ENCODE measurements at regions of chr3 and their contacts with region 1.

Region 1: DNA sequence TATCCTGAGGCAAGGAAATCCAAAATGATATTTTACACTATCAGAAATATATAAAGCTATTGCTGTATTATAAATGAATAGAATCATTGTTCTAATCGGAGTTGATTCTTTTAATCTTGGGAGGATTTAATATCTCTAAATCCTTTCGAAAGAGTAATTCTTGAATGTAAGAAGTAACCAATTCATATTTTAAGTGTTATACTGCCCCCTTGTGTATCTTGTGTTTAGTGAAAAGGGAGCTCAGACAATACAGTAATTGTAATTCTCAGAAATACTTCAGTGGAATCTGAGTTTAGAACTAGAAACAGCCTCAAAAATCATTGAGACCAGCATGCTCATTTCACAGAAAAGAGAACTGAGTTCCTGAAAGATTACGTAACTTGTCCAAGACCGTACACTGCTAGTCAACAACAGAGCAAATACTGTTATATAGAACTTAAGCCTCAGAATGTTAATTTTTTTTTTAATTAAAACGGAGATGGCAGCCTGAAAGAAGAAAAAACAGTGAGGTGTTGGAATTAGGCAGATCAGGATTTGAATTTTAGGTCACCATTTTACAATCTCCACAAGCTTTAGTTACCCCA is 42.9 kb downstream of the PLCH1 start:
- DNase-seq: no peak
- H3K4me3 ChIP-seq: no peak overlapping the region
- H3K27ac ChIP-seq: no peak overlapping the region
- H3K4me1 ChIP-seq: no peaks in the 10 kb centered on the region
- H3K27me3 ChIP-seq: no peaks in the 10 kb centered on the region
- CTCF ChIP-seq: peak; percentile 35 to 77 (median 68)
- POLR2A ChIP-seq: no peak

Region 2: DNA sequence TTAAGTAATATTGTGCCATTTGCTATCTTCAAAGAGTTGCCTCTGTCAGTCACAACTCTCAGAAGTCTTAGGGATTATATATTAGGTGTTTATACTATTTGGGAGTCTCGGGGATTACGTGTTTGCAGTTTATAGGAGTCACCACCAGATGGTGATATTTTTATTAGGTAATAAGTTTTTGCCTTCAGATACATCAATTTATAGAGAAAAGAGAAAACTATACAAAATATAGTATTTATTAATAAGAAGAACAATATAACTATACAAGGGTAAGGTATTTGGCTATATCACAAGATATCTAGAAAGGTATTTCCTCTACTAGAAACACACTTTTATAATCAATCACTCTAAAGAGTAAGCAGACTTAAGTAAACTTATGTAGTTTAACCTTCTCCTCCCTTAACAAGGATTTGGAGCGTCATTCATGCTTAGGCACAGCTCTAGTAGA is 1367.0 kb before region 1 on chr3:
- intact Hi-C with region 1: loop called (anchors 10 kb)
- DNase-seq: no peak
- H3K4me3 ChIP-seq: no peak overlapping the region
- H3K27ac ChIP-seq: no peak overlapping the region
- H3K4me1 ChIP-seq: no peaks in the 10 kb centered on the region
- H3K27me3 ChIP-seq: no peaks in the 10 kb centered on the region
- CTCF ChIP-seq: peak in 10 of 11 experiments; percentile 12 to 73 (median 62)
- POLR2A ChIP-seq: no peak

Region 3: DNA sequence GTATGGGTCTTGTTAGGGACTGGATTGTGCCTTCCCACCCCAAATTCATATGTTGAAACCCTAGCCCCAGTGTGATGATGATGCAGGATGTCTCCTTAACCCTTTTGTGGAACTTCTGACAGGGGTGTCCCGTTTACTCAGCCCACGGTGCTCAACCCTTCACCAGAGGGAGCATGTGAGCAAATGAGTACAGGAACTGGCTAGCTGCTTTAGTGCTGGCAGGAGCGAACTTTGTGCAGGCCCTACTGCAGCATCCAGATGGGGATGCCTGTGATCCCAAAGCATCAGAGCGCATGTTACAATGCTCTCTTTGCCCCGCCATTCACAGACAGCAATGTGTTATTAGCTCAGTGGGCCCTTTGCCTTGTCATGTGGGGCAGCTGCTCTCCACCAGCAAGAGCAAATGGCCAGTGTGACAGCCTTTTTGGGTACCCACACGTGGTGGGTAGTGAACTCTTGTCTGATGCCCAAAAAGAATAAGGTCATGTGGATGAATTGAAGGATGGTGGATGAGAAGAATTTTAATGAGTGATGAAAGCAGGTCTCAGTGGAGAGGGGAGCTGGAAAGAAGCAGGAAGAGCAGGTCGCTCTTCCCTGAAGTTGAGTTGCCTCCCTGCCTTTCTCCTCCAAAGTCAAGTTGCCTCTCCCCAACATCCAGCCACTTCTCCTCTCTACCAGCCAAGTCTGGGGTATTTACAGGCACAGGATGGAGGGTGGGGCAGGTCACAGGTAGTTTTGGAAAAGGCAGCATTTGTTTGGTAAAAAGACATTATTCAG is 345.2 kb before region 1 on chr3:
- intact Hi-C with region 1: loop called (anchors 5 kb)
- DNase-seq: no peak
- H3K4me3 ChIP-seq: no peak overlapping the region
- H3K27ac ChIP-seq: no peak overlapping the region
- H3K4me1 ChIP-seq: no peaks in the 10 kb centered on the region
- H3K27me3 ChIP-seq: no peaks in the 10 kb centered on the region
- CTCF ChIP-seq: no peak
- POLR2A ChIP-seq: no peak

Measured in spleen (tissue), 13 donors.